Mammary epithelial cell (primary cell): ENCODE measurements at regions of chr19 and their contacts with region 1.

Region 1: DNA sequence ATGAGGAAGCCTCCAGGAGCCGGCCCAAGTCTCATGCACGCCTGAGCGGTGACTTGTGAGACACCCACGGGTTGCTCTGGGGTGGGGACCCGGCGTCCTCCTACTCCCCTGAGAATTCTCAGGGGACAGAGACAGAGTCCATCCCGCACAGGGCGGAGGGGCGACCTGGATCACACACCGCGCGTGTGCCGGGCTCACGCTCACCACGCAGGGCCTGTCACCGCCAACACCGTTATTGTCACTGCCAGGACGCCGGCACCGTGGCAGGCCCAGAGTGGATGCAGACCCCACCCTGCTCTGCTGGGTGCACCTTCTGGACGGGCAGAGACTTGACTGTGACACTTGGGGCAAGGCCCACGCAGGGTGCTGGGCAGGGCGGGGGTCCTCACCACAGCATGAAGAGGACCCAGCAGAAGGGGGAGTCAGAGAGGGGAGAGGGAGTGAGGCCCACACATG is 16.3 kb downstream of the MOB3A start:
- DNase-seq: no peak
- H3K4me3 ChIP-seq: no peak overlapping the region
- H3K27ac ChIP-seq: no peak overlapping the region
- H3K4me1 ChIP-seq: peaks cover 13% of the 10 kb centered on the region
- H3K27me3 ChIP-seq: no peaks in the 10 kb centered on the region
- CTCF ChIP-seq: no peak

Region 2: DNA sequence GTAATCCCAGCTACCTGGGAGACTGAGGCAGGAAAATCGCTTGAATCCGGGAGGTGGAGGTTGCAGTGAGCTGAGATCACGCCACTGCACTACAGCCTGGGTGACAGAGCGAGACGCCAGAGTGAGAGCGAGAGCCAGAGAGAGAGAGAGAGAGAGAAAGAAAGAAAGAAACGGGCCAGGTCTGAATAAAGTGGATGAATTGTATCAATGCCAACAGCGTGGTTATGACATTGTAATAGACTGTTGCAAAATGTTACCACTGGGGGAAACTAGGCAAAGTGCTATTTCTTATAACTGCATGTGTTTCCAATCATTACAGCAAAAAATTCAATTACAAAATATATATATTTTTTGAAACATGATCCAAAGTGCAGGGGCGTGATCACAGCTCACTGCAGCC is 52.5 kb before region 1 on chr19:
- CTCF ChIA-PET with region 1: no interaction called
- dilution Hi-C with region 1: no loop called
- in situ Hi-C with region 1: loop called in 1 of 2 experiments (anchors 5 kb)
- intact Hi-C with region 1: no loop called
- DNase-seq: peak; percentile 41
- H3K4me3 ChIP-seq: no peak overlapping the region
- H3K27ac ChIP-seq: no peak overlapping the region
- H3K4me1 ChIP-seq: peaks cover 24% of the 10 kb centered on the region
- H3K27me3 ChIP-seq: no peaks in the 10 kb centered on the region
- CTCF ChIP-seq: no peak

Region 3: GRCh38 chr19:2038342-2039321 is 41.2 kb before region 1 on chr19:
- CTCF ChIA-PET with region 1: no interaction called
- dilution Hi-C with region 1: no loop called
- in situ Hi-C with region 1: no loop called
- intact Hi-C with region 1: no loop called
- DNase-seq: no peak
- H3K4me3 ChIP-seq: no peak overlapping the region
- H3K27ac ChIP-seq: no peak overlapping the region
- H3K4me1 ChIP-seq: peaks cover 21% of the 10 kb centered on the region
- H3K27me3 ChIP-seq: no peaks in the 10 kb centered on the region
- CTCF ChIP-seq: no peak